ENCODE measurements at regions of chr12 and their contacts with region 1.

Region 1: GRCh38 chr12:7018350-7019042 is at the start of gene LPCAT3:
- DNase-seq: peak; percentile 98
- ATAC-seq: peak; percentile 97
- H3K4me3 Mint-ChIP-seq: peak within 1 kb of the TSS; percentile 95
- H3K27ac Mint-ChIP-seq: peak within 1 kb of the TSS; percentile 86
- H3K4me1 Mint-ChIP-seq: peaks cover 28% of the 10 kb centered on the region
- H3K27me3 Mint-ChIP-seq: no peaks in the 10 kb centered on the region
- total RNA-seq, gene LPCAT3: 37.3 to 40.3 TPM

Region 2: DNA sequence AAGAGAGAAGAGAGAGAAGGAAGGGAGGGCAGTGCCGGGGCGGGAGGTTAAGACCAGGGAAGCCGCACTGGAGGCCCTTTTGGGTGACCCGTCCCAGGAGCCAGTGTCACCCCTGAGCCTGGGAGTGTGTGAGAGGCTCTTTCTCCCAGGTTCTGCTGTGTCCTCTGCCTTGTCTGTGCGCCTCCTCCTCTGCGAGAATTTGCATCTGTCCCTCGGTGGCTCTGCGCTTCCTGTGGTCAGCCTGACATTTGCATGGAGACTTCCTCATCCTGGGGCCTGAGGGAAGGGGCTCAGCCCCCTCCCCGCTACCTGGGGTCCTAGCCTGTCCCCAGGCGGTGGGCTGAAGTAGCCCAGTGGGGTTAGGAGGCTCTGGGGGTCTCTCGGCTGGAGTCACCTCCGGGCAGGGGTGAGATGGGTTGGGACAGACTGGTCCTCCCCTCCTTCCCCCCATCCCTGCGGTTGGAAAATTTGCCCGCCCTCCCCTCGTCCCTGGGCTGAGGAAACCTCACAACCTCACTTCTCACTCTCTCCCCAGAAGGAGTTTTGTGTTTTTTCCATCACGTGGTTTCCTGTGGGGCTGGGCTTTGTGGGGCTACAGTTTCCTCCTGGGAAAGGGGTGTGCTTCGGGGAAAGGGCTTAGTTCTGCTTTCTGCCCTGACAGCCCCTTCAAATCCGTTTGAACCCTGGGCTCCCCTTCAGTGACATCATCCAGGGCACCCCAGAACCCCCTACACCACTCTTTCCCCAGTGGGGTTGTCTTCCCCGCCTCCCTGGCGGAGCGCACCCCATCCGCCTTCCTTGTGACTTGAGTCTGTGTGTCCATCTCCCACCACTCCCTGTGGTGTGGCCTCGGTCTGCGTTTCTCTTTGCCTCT is 64.8 kb before region 1 on chr12:
- CTCF ChIA-PET with region 1: interaction called, 11 read pairs
- POLR2A ChIA-PET with region 1: no interaction called
- DNase-seq: peak; percentile 91
- ATAC-seq: peak; percentile 40
- H3K4me3 Mint-ChIP-seq: peak overlapping the region; percentile 99
- H3K27ac Mint-ChIP-seq: peak overlapping the region; percentile 98
- H3K4me1 Mint-ChIP-seq: peaks cover 71% of the 10 kb centered on the region
- H3K27me3 Mint-ChIP-seq: no peaks in the 10 kb centered on the region

Region 3: GRCh38 chr12:6965026-6965661 is 53.4 kb before region 1 on chr12:
- CTCF ChIA-PET with region 1: interaction called, 11 read pairs
- POLR2A ChIA-PET with region 1: interaction called, 4 read pairs
- DNase-seq: peak; percentile 93
- ATAC-seq: peak; percentile 65
- H3K4me3 Mint-ChIP-seq: peak overlapping the region; percentile 12
- H3K27ac Mint-ChIP-seq: peak overlapping the region; percentile 77
- H3K4me1 Mint-ChIP-seq: peaks cover 75% of the 10 kb centered on the region
- H3K27me3 Mint-ChIP-seq: no peaks in the 10 kb centered on the region

Region 4: DNA sequence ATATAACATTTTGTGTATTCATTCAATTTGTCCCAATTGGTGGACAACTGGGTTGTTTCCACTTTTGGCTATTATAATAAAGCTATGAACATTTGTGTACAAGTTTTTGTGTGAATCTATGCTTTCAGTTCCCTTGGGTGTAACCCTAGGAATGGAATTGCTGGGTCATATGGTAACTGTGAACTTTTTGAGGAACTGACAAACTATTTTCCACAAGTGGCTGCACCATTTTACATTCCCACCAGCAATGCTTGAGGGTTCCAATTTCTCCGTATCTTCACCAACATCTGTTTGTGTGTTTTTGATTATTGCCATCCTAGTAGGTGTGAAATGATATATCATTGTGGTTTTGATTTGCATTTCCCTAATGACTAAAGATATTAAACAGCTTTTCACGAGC is 13.2 kb before region 1 on chr12:
- CTCF ChIA-PET with region 1: interaction called, 14 read pairs
- POLR2A ChIA-PET with region 1: interaction called, 7 read pairs
- DNase-seq: no peak
- ATAC-seq: no peak
- H3K4me3 Mint-ChIP-seq: no peak overlapping the region
- H3K27ac Mint-ChIP-seq: no peak overlapping the region
- H3K4me1 Mint-ChIP-seq: peaks cover 9% of the 10 kb centered on the region
- H3K27me3 Mint-ChIP-seq: no peaks in the 10 kb centered on the region

Region 5: DNA sequence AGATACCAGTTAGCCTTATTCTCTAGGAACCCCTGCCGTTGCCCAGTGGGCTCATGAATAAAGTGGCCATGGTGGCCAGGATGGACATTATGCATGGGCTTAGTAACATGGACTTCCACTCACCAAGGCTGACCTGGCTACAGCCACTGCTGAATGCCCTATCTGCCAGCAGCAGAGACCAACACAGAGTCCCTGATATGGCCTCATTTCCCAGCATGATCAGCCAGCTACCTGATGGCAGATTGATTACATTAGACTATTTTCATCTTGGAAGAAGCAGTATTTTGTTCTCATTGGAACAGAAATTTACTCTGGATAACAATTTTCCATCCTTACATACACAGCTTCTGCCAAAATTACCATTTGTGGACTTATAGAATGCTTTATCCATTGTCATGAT is 16.0 kb after region 1 on chr12:
- CTCF ChIA-PET with region 1: interaction called, 17 read pairs
- POLR2A ChIA-PET with region 1: interaction called, 5 read pairs
- DNase-seq: no peak
- ATAC-seq: no peak
- H3K4me3 Mint-ChIP-seq: no peak overlapping the region
- H3K27ac Mint-ChIP-seq: no peak overlapping the region
- H3K4me1 Mint-ChIP-seq: peaks cover 5% of the 10 kb centered on the region
- H3K27me3 Mint-ChIP-seq: peaks cover 14% of the 10 kb centered on the region

Region 6: GRCh38 chr12:7514416-7514815 is 495.9 kb after region 1 on chr12:
- CTCF ChIA-PET with region 1: no interaction called
- POLR2A ChIA-PET with region 1: no interaction called
- DNase-seq: no peak
- ATAC-seq: no peak
- H3K4me3 Mint-ChIP-seq: no peak overlapping the region
- H3K27ac Mint-ChIP-seq: no peak overlapping the region
- H3K4me1 Mint-ChIP-seq: no peaks in the 10 kb centered on the region
- H3K27me3 Mint-ChIP-seq: peaks cover 11% of the 10 kb centered on the region